Esophagus muscularis mucosa (tissue), 4 donors: ENCODE measurements at regions of chr2 and their contacts with region 1.

Region 1: DNA sequence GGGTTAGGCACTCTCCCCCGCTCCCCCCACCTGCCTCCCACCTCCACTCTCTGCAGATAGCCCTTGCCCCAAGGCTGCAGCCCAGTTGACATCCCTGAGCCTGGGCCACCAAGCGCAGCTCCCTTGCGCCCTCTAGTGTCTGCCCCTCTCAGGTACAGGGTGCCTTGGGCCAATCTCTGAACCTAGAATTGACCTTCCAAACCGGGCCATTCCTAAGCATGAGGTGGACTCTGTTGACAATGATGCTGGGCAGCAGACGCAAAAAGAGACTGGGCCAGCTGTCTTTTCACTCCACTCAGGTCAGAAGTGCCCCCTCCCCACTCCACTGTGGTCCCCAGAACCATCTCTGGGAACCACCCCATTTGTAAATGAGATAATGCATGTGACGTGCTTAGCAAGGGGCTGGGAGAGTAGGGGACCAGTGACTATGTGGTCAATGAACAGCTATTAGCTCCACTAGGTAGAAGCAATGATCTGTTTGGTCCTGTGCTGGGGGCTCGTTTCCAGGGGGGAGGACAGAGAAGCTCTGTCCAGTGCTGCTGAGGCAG is 43.3 kb upstream of the PLB1 start:
- DNase-seq: peak; percentile 93
- H3K4me3 ChIP-seq: no peak overlapping the region
- H3K27ac ChIP-seq: no peak overlapping the region
- H3K4me1 ChIP-seq: peaks cover 0 to 11% (median 0%) of the 10 kb centered on the region in 4 donors
- H3K27me3 ChIP-seq: no peaks in the 10 kb centered on the region
- CTCF ChIP-seq: peak; percentile 87 to 94 (median 87)
- EP300 ChIP-seq: no peak
- POLR2A ChIP-seq: no peak

Region 2: GRCh38 chr2:27683390-27684071 is 769.1 kb before region 1 on chr2:
- intact Hi-C with region 1: loop called (anchors 5 kb)
- DNase-seq: no peak
- H3K4me3 ChIP-seq: no peak overlapping the region
- H3K27ac ChIP-seq: peak overlapping the region in 1 of 4 donors; percentile 38
- H3K4me1 ChIP-seq: peaks cover 0 to 13% (median 7%) of the 10 kb centered on the region in 4 donors
- H3K27me3 ChIP-seq: no peaks in the 10 kb centered on the region
- CTCF ChIP-seq: peak; percentile 91 to 96 (median 92)
- EP300 ChIP-seq: no peak
- POLR2A ChIP-seq: no peak

Region 3: GRCh38 chr2:27754138-27754588 is 698.4 kb before region 1 on chr2:
- intact Hi-C with region 1: loop called (anchors 10 kb)
- DNase-seq: no peak
- H3K4me3 ChIP-seq: no peak overlapping the region
- H3K27ac ChIP-seq: no peak overlapping the region
- H3K4me1 ChIP-seq: peaks cover 0 to 11% (median 6%) of the 10 kb centered on the region in 4 donors
- H3K27me3 ChIP-seq: no peaks in the 10 kb centered on the region
- CTCF ChIP-seq: peak; percentile 68 to 91 (median 91)
- EP300 ChIP-seq: no peak
- POLR2A ChIP-seq: no peak

Region 4: DNA sequence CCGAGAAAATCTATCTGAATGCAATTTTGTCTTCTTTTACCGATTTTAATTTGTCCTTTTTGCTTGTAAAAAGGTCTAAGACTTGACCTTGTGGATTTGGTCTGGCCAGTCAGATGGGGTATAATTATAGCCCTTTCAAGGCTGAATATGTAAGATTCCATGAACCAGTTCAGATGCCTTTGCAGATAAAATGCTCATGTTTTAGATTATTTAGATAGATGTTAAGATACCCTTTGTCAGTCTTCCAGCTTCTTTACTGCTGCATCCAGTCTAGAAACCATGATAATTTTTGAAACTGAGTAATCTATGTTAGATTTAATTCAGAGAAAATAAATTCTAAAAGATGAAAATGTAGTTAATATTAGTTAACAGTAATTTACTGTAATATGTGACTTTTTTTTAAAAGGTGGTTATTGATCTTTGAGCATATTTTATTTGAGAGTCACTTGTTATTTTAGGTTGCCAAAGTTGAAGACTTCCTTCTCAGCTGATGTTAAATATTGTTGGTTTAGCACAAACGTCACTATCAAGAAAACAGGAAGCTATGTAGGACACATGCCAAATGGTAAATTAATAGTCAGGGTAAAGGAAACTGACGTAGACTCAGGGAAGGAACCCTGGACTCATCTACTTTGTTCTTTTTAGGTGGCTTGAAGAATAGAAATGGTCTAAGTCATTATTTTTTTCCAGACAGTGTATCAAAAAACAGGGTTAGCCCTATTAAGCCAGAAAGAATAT is 532.3 kb before region 1 on chr2:
- intact Hi-C with region 1: no loop called
- DNase-seq: no peak
- H3K4me3 ChIP-seq: no peak overlapping the region
- H3K27ac ChIP-seq: peak overlapping the region; percentile 6 to 30 (median 24)
- H3K4me1 ChIP-seq: peaks cover 20 to 23% (median 21%) of the 10 kb centered on the region in 4 donors
- H3K27me3 ChIP-seq: no peaks in the 10 kb centered on the region
- CTCF ChIP-seq: no peak
- EP300 ChIP-seq: no peak
- POLR2A ChIP-seq: no peak

Region 5: DNA sequence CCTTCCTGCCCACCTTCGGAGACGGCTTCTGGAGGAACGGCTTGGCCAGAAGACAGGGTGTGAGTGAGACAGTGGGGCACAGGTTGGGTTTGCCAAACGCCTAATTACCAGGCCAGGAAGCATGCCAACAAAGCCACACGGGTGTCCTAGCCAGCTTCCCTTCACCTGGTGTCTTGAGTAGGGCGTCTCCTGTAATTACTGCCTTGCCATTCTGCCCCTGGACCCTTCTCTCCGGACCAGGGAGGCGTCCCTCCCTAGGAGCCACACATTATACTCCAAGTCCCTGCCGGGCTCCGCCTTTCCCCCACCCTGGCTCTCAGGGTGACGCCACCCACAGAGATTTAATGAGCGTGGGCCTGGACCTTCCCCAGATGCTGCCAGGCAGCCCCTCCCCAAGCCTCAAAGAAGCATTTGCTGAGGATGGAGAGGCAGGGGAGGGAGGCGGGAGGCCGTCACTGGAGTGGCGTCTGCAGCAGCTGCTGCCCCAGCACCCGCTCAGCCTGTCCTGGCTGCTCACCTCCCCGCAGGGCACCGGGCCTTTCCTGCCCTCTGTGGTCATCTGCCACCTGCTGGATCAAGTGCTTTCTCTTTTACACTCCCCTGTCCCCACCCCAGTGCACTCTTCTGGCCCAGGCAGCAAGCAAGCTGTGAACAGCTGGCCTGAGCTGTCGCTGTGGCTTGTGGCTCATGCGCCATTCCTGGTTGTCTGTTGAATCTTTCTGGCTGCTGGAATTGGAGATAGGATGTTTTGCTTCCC is 39.3 kb before region 1 on chr2:
- intact Hi-C with region 1: no loop called
- DNase-seq: no peak
- H3K4me3 ChIP-seq: no peak overlapping the region
- H3K27ac ChIP-seq: peak overlapping the region in 3 of 4 donors; percentile 25 to 46 (median 36)
- H3K4me1 ChIP-seq: peaks cover 35 to 67% (median 56%) of the 10 kb centered on the region in 4 donors
- H3K27me3 ChIP-seq: no peaks in the 10 kb centered on the region
- CTCF ChIP-seq: peak in 1 of 3 experiments; percentile 21
- EP300 ChIP-seq: no peak
- POLR2A ChIP-seq: no peak